Activated CD4-positive, alpha-beta T cell treated with anti-CD3 and anti-CD28 coated beads, Interleukin-2, amount 10 ng/mL, durations not matched to agents 24 days and 14 days (primary cell): ENCODE measurements at regions of chr12 and their contacts with region 1.

Region 1: DNA sequence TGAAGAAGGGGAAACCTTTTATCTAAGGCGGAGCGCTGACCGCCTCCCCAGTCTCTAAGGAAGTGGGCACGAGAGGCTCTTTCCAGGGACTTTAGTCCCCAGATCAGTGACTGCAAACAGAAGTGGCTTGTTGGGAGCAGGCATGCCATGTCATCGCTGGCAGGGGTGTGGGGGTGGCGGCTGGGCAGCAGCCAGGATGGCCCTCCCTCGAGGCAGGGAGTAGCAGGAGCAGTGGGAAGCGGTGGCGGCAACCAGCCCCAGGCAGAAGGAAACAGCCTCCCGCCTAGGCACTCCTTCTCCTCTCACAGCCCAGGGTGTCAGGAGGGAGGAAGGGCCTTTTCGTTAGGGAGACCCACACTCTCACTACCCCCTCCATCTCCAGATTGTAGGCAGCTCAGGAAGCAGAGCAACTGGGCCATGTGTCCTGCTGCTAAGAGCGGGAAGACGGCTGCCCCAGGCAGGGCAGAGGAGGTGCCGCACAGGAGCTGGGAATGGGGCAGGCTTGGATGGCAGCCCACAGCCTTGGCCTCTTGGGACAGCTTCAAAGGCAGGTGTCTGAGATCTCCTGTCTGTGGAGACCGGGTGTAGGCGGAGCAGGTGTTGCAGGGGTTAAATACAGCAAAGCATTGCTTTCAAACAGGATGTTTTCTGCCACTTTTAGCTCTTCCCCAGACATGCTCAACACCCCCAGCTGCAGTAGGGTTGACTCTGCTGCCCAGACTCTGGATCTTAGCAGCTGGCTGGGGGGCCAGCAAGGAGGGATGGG is 21.8 kb downstream of the VDR start:
- DNase-seq: peak; percentile 84
- H3K4me3 Mint-ChIP-seq: peak overlapping the region; percentile 95
- H3K27ac Mint-ChIP-seq: peak overlapping the region; percentile 99
- H3K4me1 Mint-ChIP-seq: peaks cover 81% of the 10 kb centered on the region
- H3K27me3 Mint-ChIP-seq: no peaks in the 10 kb centered on the region

Region 2: GRCh38 chr12:47095446-47096236 is 787.3 kb before region 1 on chr12:
- intact Hi-C with region 1: no loop called
- DNase-seq: no peak
- H3K4me3 Mint-ChIP-seq: no peak overlapping the region
- H3K27ac Mint-ChIP-seq: no peak overlapping the region
- H3K4me1 Mint-ChIP-seq: peaks cover 17% of the 10 kb centered on the region
- H3K27me3 Mint-ChIP-seq: no peaks in the 10 kb centered on the region

Region 3: DNA sequence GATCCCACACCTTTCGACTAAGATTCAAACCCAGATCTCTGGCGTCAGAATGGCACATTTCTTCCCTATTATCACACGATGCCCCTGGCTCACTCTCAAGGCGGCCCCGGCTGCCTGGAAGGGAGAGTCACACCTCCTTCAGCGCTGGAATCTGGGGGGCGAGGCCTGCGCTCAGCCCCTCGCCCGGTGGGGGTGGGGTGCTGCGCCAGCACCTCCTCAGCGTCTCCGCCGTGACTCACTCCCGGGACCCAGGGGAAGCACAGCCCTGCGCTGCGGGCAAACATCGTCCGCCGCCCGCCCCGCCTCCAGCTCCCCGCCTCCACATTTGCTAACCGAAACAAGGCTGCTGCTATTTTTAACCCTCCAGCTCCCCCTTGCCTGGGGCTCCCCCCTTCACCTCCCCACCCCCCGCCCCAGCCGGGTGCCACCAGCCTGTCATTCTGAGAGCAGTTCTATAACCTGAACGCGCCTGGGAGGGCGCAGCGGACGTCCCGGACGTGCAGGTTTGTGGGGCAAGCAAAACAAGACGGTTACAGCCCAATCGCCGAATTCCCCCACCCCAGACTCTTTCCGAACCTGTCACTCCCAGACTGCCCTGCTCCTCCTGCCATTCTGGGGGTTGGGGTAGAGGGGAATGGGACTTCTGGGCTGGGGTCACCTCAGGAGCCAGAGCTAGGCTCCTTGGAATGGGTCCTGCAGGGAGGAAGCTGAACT is 70.0 kb before region 1 on chr12:
- intact Hi-C with region 1: loop called (anchors 1 kb)
- DNase-seq: peak; percentile 97
- H3K4me3 Mint-ChIP-seq: peak overlapping the region; percentile 88
- H3K27ac Mint-ChIP-seq: peak overlapping the region; percentile 99
- H3K4me1 Mint-ChIP-seq: peaks cover 81% of the 10 kb centered on the region
- H3K27me3 Mint-ChIP-seq: no peaks in the 10 kb centered on the region

Region 4: DNA sequence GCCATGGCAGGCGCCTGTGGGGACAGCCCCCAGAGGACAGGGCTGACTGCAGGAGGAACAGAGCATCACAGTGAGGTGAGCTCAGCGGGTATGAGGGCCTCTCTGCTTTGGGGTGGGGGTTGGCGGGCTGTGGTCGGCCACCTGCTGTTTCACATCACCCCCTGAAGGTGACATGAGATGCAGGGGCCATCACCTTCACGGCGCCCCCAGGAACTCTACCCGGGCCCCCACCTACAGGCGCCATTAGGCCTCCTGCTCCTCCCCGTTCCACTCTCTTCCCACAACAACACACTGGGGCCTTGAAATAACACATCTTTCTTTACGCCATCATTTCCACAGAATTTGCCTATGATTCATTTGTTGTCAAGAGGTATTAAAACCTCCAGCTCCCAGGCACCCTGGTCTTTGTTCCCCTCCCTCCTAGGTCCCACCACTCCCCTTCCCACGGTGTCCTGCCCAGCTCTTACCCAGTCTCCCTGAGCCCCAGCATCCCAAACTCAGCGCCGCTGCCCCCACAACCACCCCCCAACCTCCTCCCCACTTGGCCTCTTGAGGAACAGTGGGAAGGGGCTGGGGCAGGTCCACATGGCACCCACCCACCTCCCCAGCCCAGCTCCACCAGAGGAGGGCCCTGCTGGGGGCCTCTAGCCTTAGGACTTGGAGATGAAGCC is 50.6 kb before region 1 on chr12:
- intact Hi-C with region 1: loop called (anchors 1 kb)
- DNase-seq: peak; percentile 80
- H3K4me3 Mint-ChIP-seq: peak overlapping the region; percentile 79
- H3K27ac Mint-ChIP-seq: peak overlapping the region; percentile 99
- H3K4me1 Mint-ChIP-seq: peaks cover 86% of the 10 kb centered on the region
- H3K27me3 Mint-ChIP-seq: no peaks in the 10 kb centered on the region

Region 5: GRCh38 chr12:47867495-47867941 is 15.4 kb before region 1 on chr12:
- intact Hi-C with region 1: loop called (anchors 1 kb)
- DNase-seq: peak; percentile 84
- H3K4me3 Mint-ChIP-seq: peak overlapping the region; percentile 64
- H3K27ac Mint-ChIP-seq: peak overlapping the region; percentile 93
- H3K4me1 Mint-ChIP-seq: peaks cover 79% of the 10 kb centered on the region
- H3K27me3 Mint-ChIP-seq: no peaks in the 10 kb centered on the region

Region 6: GRCh38 chr12:48237162-48237561 is 354.2 kb after region 1 on chr12:
- intact Hi-C with region 1: no loop called
- DNase-seq: no peak
- H3K4me3 Mint-ChIP-seq: no peak overlapping the region
- H3K27ac Mint-ChIP-seq: no peak overlapping the region
- H3K4me1 Mint-ChIP-seq: no peaks in the 10 kb centered on the region
- H3K27me3 Mint-ChIP-seq: peaks cover 14% of the 10 kb centered on the region

Region 7: GRCh38 chr12:48681738-48682532 is 799.0 kb after region 1 on chr12 and contains the start of gene KANSL2:
- intact Hi-C with region 1: loop called (anchors 1 kb)
- DNase-seq: peak; percentile 99
- H3K4me3 Mint-ChIP-seq: peak within 1 kb of the TSS; percentile 98
- H3K27ac Mint-ChIP-seq: peak within 1 kb of the TSS; percentile 94
- H3K4me1 Mint-ChIP-seq: peaks cover 33% of the 10 kb centered on the region
- H3K27me3 Mint-ChIP-seq: no peaks in the 10 kb centered on the region
- total RNA-seq, gene KANSL2: 61.3 and 66.5 TPM in 2 replicates